ENCODE measurements at regions of chr5 and their contacts with region 1.

Region 1: DNA sequence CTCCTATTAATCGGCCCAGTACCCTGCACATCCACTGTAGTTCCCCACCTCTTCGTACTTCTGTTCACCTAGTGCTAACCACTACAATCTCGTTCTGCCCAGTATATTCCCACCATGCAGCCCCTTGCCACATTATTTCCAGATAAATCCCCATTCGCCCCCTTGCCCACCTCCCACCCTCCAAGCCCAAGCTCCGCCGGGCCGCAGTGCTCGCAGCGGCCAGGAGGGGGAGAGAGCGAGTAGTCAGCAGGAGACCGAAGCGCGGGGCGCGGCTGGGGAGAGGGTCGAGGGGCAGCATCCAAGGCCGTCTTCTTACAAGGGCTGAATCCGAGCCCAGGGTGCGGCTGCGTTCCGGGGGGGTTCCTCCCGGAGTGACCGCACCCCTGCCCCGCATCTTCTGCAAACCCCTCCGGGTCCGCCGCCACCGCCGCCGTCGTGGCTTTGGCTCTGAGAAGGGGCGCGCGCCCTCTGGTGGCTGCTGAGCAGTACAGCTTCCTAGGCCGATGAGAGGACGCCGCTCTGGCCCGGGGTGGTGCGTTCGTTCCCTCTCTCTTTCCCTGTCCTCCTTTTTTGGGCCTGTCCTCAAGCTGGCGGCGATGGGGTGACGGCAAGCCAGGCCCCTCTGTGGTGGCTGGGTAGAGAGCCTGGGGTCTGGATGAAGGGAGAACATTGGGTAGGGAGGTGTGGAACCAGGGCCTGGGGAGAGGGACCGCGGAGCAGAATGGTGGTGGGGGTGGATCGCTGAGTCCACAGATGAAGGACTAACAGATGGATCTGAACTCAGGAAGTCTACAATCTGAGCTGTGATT is 30.0 kb upstream of the PSD2 start:
- DNase-seq: peak; percentile 93
- ATAC-seq: peak; percentile 79
- H3K4me3 ChIP-seq: peak overlapping the region; percentile 17 to 66 (median 58)
- H3K4me3 Mint-ChIP-seq: peak overlapping the region; percentile 86
- H3K27ac ChIP-seq: no peak overlapping the region
- H3K27ac Mint-ChIP-seq: peak overlapping the region; percentile 82
- H3K4me1 ChIP-seq: peaks cover 24 to 26% of the 10 kb centered on the region in 2 donors
- H3K4me1 Mint-ChIP-seq: peaks cover 31% of the 10 kb centered on the region
- H3K27me3 ChIP-seq: peaks cover 0 to 14% (median 4%) of the 10 kb centered on the region in 4 experiments
- H3K27me3 Mint-ChIP-seq: peaks cover 7% of the 10 kb centered on the region
- CTCF ChIP-seq: peak; percentile 100

Region 2: GRCh38 chr5:138054847-138055558 is 1710.6 kb before region 1 on chr5:
- CTCF ChIA-PET with region 1: no interaction called
- POLR2A ChIA-PET with region 1: no interaction called
- intact Hi-C with region 1: no loop called
- DNase-seq: no peak
- ATAC-seq: no peak
- H3K4me3 ChIP-seq: no peak overlapping the region
- H3K4me3 Mint-ChIP-seq: no peak overlapping the region
- H3K27ac ChIP-seq: no peak overlapping the region
- H3K27ac Mint-ChIP-seq: no peak overlapping the region
- H3K4me1 ChIP-seq: no peaks in the 10 kb centered on the region
- H3K4me1 Mint-ChIP-seq: no peaks in the 10 kb centered on the region
- H3K27me3 ChIP-seq: no peaks in the 10 kb centered on the region
- H3K27me3 Mint-ChIP-seq: no peaks in the 10 kb centered on the region
- CTCF ChIP-seq: no peak

Region 3: GRCh38 chr5:139422307-139422893 is 343.2 kb before region 1 on chr5:
- CTCF ChIA-PET with region 1: interaction called, 19 read pairs
- POLR2A ChIA-PET with region 1: no interaction called
- intact Hi-C with region 1: loop called (anchors 1 kb)
- DNase-seq: peak; percentile 80
- ATAC-seq: peak; percentile 95
- H3K4me3 ChIP-seq: no peak overlapping the region
- H3K4me3 Mint-ChIP-seq: no peak overlapping the region
- H3K27ac ChIP-seq: no peak overlapping the region
- H3K27ac Mint-ChIP-seq: peak overlapping the region; percentile 38
- H3K4me1 ChIP-seq: no peaks in the 10 kb centered on the region
- H3K4me1 Mint-ChIP-seq: peaks cover 2% of the 10 kb centered on the region
- H3K27me3 ChIP-seq: no peaks in the 10 kb centered on the region
- H3K27me3 Mint-ChIP-seq: no peaks in the 10 kb centered on the region
- CTCF ChIP-seq: peak; percentile 88

Region 4: DNA sequence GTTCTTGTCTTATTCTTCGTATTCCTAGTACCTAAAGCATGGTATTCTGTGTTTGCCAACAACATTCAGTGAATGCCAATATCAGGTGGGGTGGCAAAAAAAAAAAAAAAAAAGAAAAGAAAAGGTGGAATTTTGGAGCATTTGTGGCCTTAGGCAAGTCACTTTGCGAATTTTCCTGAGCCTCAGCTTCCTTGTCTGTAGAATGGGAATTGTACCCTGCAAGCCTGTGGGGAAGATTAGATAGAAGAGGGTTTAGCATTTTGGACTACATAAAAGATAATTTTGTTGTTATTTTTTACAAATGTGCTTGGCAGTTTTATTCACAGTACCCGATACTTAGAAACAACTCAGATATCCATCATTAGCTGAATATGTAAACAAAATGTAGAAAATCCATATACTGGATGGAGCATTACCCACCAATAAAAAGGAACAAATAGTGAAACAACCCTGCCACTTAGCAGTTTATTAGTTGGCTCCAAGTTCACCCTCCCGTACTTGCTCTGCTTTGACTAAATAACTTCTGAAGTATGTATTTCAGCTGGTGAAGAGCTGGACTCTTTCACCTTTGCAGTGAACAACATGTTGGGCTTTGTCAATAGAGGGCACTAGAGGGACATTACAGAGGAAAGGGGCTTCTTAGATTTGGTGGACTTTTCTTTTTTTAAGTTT is 190.8 kb before region 1 on chr5:
- CTCF ChIA-PET with region 1: interaction called, 7 read pairs
- POLR2A ChIA-PET with region 1: no interaction called
- intact Hi-C with region 1: loop called (anchors 1 kb)
- DNase-seq: peak; percentile 63
- ATAC-seq: peak; percentile 67
- H3K4me3 ChIP-seq: no peak overlapping the region
- H3K4me3 Mint-ChIP-seq: peak overlapping the region; percentile 2
- H3K27ac ChIP-seq: peak overlapping the region in 1 of 2 donors; percentile 66
- H3K27ac Mint-ChIP-seq: peak overlapping the region; percentile 5
- H3K4me1 ChIP-seq: peaks cover 71 to 76% of the 10 kb centered on the region in 2 donors
- H3K4me1 Mint-ChIP-seq: peaks cover 74% of the 10 kb centered on the region
- H3K27me3 ChIP-seq: no peaks in the 10 kb centered on the region
- H3K27me3 Mint-ChIP-seq: no peaks in the 10 kb centered on the region
- CTCF ChIP-seq: peak; percentile 79

Region 5: GRCh38 chr5:139651853-139652787 is 113.5 kb before region 1 on chr5:
- CTCF ChIA-PET with region 1: interaction called, 15 read pairs
- POLR2A ChIA-PET with region 1: interaction called, 6 read pairs
- intact Hi-C with region 1: no loop called
- DNase-seq: peak; percentile 92
- ATAC-seq: peak; percentile 50
- H3K4me3 ChIP-seq: peak overlapping the region; percentile 50 to 98 (median 95)
- H3K4me3 Mint-ChIP-seq: peak overlapping the region; percentile 88
- H3K27ac ChIP-seq: peak overlapping the region; percentile 71 to 90
- H3K27ac Mint-ChIP-seq: peak overlapping the region; percentile 94
- H3K4me1 ChIP-seq: peaks cover 68 to 74% of the 10 kb centered on the region in 2 donors
- H3K4me1 Mint-ChIP-seq: peaks cover 71% of the 10 kb centered on the region
- H3K27me3 ChIP-seq: no peaks in the 10 kb centered on the region
- H3K27me3 Mint-ChIP-seq: no peaks in the 10 kb centered on the region
- CTCF ChIP-seq: no peak

Region 6: DNA sequence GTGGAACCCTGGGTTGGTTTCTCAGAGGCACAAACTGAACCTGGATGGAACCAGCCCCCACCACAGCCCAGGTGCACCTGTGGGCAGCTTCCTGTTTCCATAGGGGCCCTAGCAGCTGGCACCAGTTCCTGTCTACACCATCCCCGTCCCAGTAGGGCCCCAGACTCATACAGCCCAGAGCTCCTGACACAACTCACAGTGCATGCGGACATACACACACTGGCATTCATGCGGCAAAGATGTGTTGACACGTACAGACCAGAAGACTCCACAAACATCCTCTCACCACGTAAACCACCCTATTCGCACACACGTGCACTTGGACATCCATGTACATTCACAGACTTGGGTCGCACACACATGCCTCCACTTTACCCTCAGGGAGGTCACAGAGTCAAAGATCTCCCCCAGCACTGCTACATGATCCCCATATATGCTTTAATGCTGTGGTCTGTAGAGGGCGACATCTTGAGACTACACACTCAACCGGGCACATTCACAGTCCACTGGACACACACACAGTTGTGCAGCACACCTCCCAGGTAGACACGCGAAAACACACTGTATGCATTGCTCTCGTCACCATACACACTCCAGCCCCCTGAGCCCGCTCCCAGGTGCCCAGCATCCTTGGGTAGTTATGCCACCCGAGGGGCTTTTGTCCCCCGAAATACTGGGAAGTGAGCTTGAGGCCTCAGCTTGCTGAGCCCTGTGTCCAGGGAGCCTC is 95.1 kb before region 1 on chr5:
- CTCF ChIA-PET with region 1: interaction called, 25 read pairs
- POLR2A ChIA-PET with region 1: interaction called, 7 read pairs
- intact Hi-C with region 1: loop called (anchors 1 kb)
- DNase-seq: peak; percentile 89
- ATAC-seq: peak; percentile 69
- H3K4me3 ChIP-seq: peak overlapping the region in 4 of 5 experiments; percentile 40 to 71 (median 52)
- H3K4me3 Mint-ChIP-seq: peak overlapping the region; percentile 86
- H3K27ac ChIP-seq: peak overlapping the region; percentile 89 to 90
- H3K27ac Mint-ChIP-seq: peak overlapping the region; percentile 95
- H3K4me1 ChIP-seq: peaks cover 88 to 98% of the 10 kb centered on the region in 2 donors
- H3K4me1 Mint-ChIP-seq: peaks cover 88% of the 10 kb centered on the region
- H3K27me3 ChIP-seq: no peaks in the 10 kb centered on the region
- H3K27me3 Mint-ChIP-seq: no peaks in the 10 kb centered on the region
- CTCF ChIP-seq: peak; percentile 47

Region 7: GRCh38 chr5:139696894-139697658 is 68.5 kb before region 1 on chr5:
- CTCF ChIA-PET with region 1: interaction called, 125 read pairs
- POLR2A ChIA-PET with region 1: interaction called, 4 read pairs
- intact Hi-C with region 1: no loop called
- DNase-seq: peak; percentile 55
- ATAC-seq: peak; percentile 34
- H3K4me3 ChIP-seq: peak overlapping the region in 4 of 5 experiments; percentile 33 to 56 (median 45)
- H3K4me3 Mint-ChIP-seq: peak overlapping the region; percentile 82
- H3K27ac ChIP-seq: no peak overlapping the region
- H3K27ac Mint-ChIP-seq: peak overlapping the region; percentile 72
- H3K4me1 ChIP-seq: peaks cover 41 to 48% of the 10 kb centered on the region in 2 donors
- H3K4me1 Mint-ChIP-seq: peaks cover 45% of the 10 kb centered on the region
- H3K27me3 ChIP-seq: peaks cover 0 to 35% (median 10%) of the 10 kb centered on the region in 4 experiments
- H3K27me3 Mint-ChIP-seq: peaks cover 17% of the 10 kb centered on the region
- CTCF ChIP-seq: no peak

Region 8: DNA sequence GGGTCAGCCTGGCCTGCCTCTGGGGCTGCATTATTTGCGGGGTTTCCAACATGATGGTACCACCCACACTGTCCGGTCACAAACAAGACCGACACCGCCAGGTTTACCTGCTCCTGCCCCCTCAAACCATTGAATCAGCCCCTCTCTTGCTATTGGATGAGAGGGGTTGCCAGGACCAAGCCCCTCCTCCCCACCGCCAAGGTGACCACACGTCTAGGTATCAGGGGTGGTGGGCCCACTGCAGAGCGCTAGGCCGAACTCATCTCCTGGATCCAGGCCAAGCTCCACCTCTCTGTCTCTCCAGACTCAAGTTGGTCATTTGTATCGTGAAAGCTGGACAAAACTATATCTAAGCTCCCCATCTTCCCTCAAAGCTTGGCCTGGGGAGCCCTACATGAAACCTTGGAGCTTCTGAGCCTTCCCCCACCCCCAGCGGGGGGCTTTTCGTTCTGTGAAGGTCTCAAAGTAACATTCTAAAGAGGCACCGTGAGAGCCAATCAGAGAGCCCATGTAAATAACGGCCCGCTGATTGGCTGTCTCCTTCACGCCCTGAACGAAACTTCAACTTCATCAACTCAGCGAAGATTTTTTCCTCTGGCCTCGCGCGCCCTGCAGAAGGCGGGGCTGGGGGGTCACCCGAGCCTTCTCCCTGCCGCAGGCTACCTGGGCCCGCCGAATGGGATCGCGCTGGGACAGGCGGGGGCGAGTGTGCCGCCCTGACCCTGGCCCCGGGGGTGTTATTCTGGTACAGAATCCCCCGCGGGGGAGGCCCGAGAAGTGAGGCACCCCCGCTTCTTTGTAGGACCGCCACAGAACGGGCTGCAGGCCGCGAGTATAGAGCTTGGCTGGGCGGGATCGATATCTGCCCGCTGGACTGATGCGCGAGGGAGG is 19.6 kb before region 1 on chr5:
- CTCF ChIA-PET with region 1: interaction called, 120 read pairs
- POLR2A ChIA-PET with region 1: interaction called, 27 read pairs
- intact Hi-C with region 1: loop called (anchors 1 kb)
- DNase-seq: peak; percentile 84
- ATAC-seq: peak; percentile 29
- H3K4me3 ChIP-seq: peak overlapping the region in 4 of 5 experiments; percentile 57 to 71 (median 58)
- H3K4me3 Mint-ChIP-seq: peak overlapping the region; percentile 89
- H3K27ac ChIP-seq: peak overlapping the region; percentile 82 to 85
- H3K27ac Mint-ChIP-seq: peak overlapping the region; percentile 94
- H3K4me1 ChIP-seq: peaks cover 50 to 68% of the 10 kb centered on the region in 2 donors
- H3K4me1 Mint-ChIP-seq: peaks cover 79% of the 10 kb centered on the region
- H3K27me3 ChIP-seq: peaks cover 0 to 2% (median 0%) of the 10 kb centered on the region in 4 experiments
- H3K27me3 Mint-ChIP-seq: no peaks in the 10 kb centered on the region
- CTCF ChIP-seq: no peak

Region 9: GRCh38 chr5:139822553-139823425 is 57.2 kb after region 1 on chr5:
- CTCF ChIA-PET with region 1: no interaction called
- POLR2A ChIA-PET with region 1: no interaction called
- intact Hi-C with region 1: no loop called
- DNase-seq: no peak
- ATAC-seq: no peak
- H3K4me3 ChIP-seq: no peak overlapping the region
- H3K4me3 Mint-ChIP-seq: no peak overlapping the region
- H3K27ac ChIP-seq: no peak overlapping the region
- H3K27ac Mint-ChIP-seq: no peak overlapping the region
- H3K4me1 ChIP-seq: no peaks in the 10 kb centered on the region
- H3K4me1 Mint-ChIP-seq: no peaks in the 10 kb centered on the region
- H3K27me3 ChIP-seq: peaks cover 0 to 8% (median 3%) of the 10 kb centered on the region in 4 experiments
- H3K27me3 Mint-ChIP-seq: peaks cover 45% of the 10 kb centered on the region
- CTCF ChIP-seq: no peak

Measured in B cell (primary cell).